Endothelial cell of umbilical vein (primary cell): ENCODE measurements at regions of chr14 and their contacts with region 1.

Region 1: GRCh38 chr14:70339044-70339443 is 20.4 kb downstream of the COX16 start:
- DNase-seq: no peak
- H3K4me3 ChIP-seq: no peak overlapping the region
- H3K27ac ChIP-seq: no peak overlapping the region
- H3K4me1 ChIP-seq: no peaks in the 10 kb centered on the region
- H3K27me3 ChIP-seq: no peaks in the 10 kb centered on the region
- CTCF ChIP-seq: no peak
- POLR2A ChIP-seq: no peak

Region 2: GRCh38 chr14:70086685-70087379 is 252.2 kb before region 1 on chr14:
- CTCF ChIA-PET with region 1: no interaction called
- POLR2A ChIA-PET with region 1: no interaction called
- dilution Hi-C with region 1: no loop called
- intact Hi-C with region 1: no loop called
- DNase-seq: peak; percentile 35
- H3K4me3 ChIP-seq: no peak overlapping the region
- H3K27ac ChIP-seq: no peak overlapping the region
- H3K4me1 ChIP-seq: no peaks in the 10 kb centered on the region
- H3K27me3 ChIP-seq: no peaks in the 10 kb centered on the region
- CTCF ChIP-seq: peak; percentile 34 to 51
- POLR2A ChIP-seq: no peak

Region 3: DNA sequence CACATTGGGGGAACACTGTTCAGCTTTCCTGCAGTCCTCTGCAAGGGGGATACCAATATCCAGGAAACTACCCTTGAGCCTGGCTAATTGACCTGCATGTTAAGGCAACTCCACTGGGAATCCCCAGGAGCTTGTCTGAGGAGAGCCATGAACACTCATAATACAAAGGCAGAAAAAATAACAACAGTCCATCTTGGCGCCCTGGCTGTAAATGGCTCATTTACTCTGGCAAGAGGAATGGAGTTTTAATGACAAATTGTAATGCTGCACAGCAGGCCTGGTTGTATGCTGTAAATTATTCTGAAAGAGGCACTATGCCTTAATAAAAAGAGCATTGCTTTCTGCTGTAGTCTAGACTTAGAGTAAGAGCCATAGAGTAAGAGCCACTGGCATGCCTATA is 208.6 kb before region 1 on chr14:
- CTCF ChIA-PET with region 1: no interaction called
- POLR2A ChIA-PET with region 1: no interaction called
- dilution Hi-C with region 1: no loop called
- intact Hi-C with region 1: no loop called
- DNase-seq: no peak
- H3K4me3 ChIP-seq: no peak overlapping the region
- H3K27ac ChIP-seq: no peak overlapping the region
- H3K4me1 ChIP-seq: no peaks in the 10 kb centered on the region
- H3K27me3 ChIP-seq: no peaks in the 10 kb centered on the region
- CTCF ChIP-seq: no peak
- POLR2A ChIP-seq: no peak

Region 4: DNA sequence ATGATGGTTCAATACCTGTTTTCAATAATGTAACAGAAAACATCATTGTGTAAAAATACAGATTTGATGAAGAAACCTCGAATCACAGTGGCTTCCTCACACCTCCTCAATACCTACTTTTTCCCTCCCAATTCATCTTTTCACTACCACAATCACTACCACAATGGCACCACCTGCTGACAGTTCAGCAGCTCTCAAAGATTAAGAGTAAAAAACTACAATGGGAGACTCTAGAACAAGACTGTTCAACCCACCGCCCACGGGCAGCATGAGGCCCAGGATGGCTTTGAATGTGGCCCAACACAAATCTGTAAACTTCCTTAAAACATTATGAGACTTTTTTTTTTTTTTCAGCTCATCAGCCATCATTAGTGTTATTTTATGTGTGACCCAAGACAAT is 246.2 kb after region 1 on chr14:
- CTCF ChIA-PET with region 1: no interaction called
- POLR2A ChIA-PET with region 1: no interaction called
- dilution Hi-C with region 1: no loop called
- intact Hi-C with region 1: loop called (anchors 10 kb)
- DNase-seq: no peak
- H3K4me3 ChIP-seq: no peak overlapping the region
- H3K27ac ChIP-seq: no peak overlapping the region
- H3K4me1 ChIP-seq: no peaks in the 10 kb centered on the region
- H3K27me3 ChIP-seq: no peaks in the 10 kb centered on the region
- CTCF ChIP-seq: no peak
- POLR2A ChIP-seq: no peak